ENCODE measurements at regions of chr5 and their contacts with region 1.

Region 1: GRCh38 chr5:78294248-78295034 is at the start of gene AP3B1:
- DNase-seq: peak; percentile 99
- H3K4me3 ChIP-seq: peak within 1 kb of the TSS; percentile 86 to 90
- H3K27ac ChIP-seq: peak within 1 kb of the TSS; percentile 86 to 89
- H3K4me1 ChIP-seq: peaks cover 0 to 22% (median 8%) of the 10 kb centered on the region in 4 donors
- H3K27me3 ChIP-seq: no peaks in the 10 kb centered on the region
- CTCF ChIP-seq: no peak

Region 2: GRCh38 chr5:78359831-78360673 is 65.6 kb after region 1 on chr5 and contains the start of gene SCAMP1:
- intact Hi-C with region 1: loop called (anchors 1 kb)
- DNase-seq: peak; percentile 88 to 95
- H3K4me3 ChIP-seq: peak within 1 kb of the TSS; percentile 78 to 99
- H3K27ac ChIP-seq: peak within 1 kb of the TSS; percentile 91 to 94
- H3K4me1 ChIP-seq: peaks cover 0 to 25% (median 10%) of the 10 kb centered on the region in 4 donors
- H3K27me3 ChIP-seq: no peaks in the 10 kb centered on the region
- CTCF ChIP-seq: peak; percentile 48 to 50

Region 3: GRCh38 chr5:78771260-78772205 is 477.1 kb after region 1 on chr5:
- intact Hi-C with region 1: no loop called
- DNase-seq: no peak
- H3K4me3 ChIP-seq: no peak overlapping the region
- H3K27ac ChIP-seq: no peak overlapping the region
- H3K4me1 ChIP-seq: no peaks in the 10 kb centered on the region
- H3K27me3 ChIP-seq: no peaks in the 10 kb centered on the region
- CTCF ChIP-seq: no peak

Measured in tibial artery (tissue), 4 donors.